ENCODE measurements at regions of chr5 and their contacts with region 1.

Region 1: GRCh38 chr5:139787568-139788293 is 7.9 kb upstream of the PSD2 start:
- DNase-seq: peak; percentile 85 to 89
- ATAC-seq: peak; percentile 88 to 92 (median 91)
- H3K4me3 ChIP-seq: peak overlapping the region; percentile 81
- H3K4me3 Mint-ChIP-seq: peak overlapping the region; percentile 84
- H3K27ac ChIP-seq: no peak overlapping the region
- H3K27ac Mint-ChIP-seq: no peak overlapping the region
- H3K4me1 ChIP-seq: peaks cover 16% of the 10 kb centered on the region
- H3K4me1 Mint-ChIP-seq: no peaks in the 10 kb centered on the region
- H3K27me3 ChIP-seq: no peaks in the 10 kb centered on the region
- H3K27me3 Mint-ChIP-seq: peaks cover 8 to 25% of the 10 kb centered on the region in 2 donors
- CTCF ChIP-seq: peak; percentile 98

Region 2: GRCh38 chr5:139501381-139501780 is 286.4 kb before region 1 on chr5:
- intact Hi-C with region 1: no loop called
- DNase-seq: no peak
- ATAC-seq: no peak
- H3K4me3 ChIP-seq: no peak overlapping the region
- H3K4me3 Mint-ChIP-seq: no peak overlapping the region
- H3K27ac ChIP-seq: no peak overlapping the region
- H3K27ac Mint-ChIP-seq: no peak overlapping the region
- H3K4me1 ChIP-seq: no peaks in the 10 kb centered on the region
- H3K4me1 Mint-ChIP-seq: no peaks in the 10 kb centered on the region
- H3K27me3 ChIP-seq: no peaks in the 10 kb centered on the region
- H3K27me3 Mint-ChIP-seq: peaks cover 5 to 12% of the 10 kb centered on the region in 2 donors
- CTCF ChIP-seq: no peak

Region 3: DNA sequence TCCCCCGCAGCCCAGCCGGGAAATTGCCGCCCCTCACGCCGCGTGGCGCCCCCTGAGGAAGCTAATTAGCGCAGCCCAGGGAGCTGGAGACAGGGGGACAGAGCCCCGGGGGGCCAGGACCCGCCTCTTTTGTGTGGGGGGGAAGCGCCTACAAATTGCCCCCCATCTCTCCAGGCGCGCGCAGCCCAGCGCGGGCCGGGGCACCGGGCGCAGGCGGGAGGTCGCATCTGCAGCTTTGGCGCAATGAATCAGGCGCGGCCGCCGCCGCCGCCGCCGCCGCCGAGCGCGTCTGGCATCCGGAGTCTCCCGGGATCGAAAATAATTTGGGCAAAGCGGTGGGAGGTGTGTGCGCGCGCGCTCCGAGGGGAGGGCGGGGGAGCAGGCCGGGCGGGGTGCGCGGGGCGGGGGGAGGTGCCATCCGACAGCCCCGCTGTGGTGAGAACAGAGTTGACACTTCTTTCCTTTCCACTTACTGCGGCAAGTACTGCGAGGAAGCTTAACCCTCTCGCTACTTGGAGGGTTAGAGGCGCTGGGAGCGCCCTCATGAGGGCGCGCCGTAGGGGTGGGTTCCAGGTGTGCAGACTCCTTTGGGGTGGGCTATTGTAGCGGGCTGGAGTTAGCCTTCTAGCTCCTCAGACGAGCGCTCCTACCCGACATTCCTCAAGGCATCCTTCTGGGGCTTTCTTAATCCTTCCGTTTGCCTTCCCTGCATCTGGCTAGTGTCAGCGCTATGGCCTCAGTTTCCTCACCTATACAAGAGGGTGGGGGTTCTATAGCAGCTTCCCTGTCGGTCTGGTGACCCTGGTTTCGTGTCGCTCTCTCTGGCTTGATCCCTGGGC is 76.4 kb before region 1 on chr5:
- intact Hi-C with region 1: no loop called
- DNase-seq: peak; percentile 71 to 84
- ATAC-seq: peak; percentile 62 to 77 (median 70)
- H3K4me3 ChIP-seq: peak overlapping the region; percentile 65
- H3K4me3 Mint-ChIP-seq: peak overlapping the region; percentile 83
- H3K27ac ChIP-seq: peak overlapping the region; percentile 97
- H3K27ac Mint-ChIP-seq: peak overlapping the region; percentile 89 to 94
- H3K4me1 ChIP-seq: peaks cover 48% of the 10 kb centered on the region
- H3K4me1 Mint-ChIP-seq: peaks cover 32 to 43% of the 10 kb centered on the region in 2 donors
- H3K27me3 ChIP-seq: no peaks in the 10 kb centered on the region
- H3K27me3 Mint-ChIP-seq: no peaks in the 10 kb centered on the region
- CTCF ChIP-seq: peak; percentile 31

Region 4: DNA sequence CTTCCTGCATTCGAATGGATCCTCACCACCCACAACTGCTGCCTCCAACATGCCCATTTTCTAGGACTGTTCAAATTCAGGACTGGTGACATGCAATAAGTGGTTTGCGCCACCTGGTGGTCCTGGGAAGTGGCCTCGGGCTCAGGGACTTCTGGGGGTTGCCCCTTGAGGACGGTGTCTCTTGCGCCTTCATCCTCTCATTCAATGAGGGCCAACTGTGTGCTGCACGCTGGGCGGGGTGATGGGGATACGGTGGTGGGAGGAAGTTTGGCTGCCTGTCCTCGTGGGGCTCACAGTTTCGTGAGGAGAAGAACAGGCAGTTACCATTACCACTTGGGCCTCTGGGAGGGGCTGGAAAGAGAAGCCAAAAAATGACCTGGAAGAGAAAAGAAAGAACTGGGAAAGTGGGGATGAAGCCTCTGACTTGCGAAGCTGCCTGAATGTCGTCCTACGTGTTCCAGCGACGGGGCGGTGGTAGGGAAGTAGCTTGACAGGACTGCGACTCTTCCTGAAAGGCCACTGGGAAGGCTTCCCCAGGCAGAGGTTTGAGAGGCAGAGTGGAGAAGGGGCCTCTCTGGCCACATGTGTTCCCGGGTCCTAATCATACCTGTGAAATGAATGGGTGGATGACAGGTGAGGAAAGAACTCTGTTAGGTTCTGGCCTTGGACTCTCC is 56.9 kb after region 1 on chr5:
- intact Hi-C with region 1: loop called (anchors 5 kb)
- DNase-seq: peak; percentile 63 to 83
- ATAC-seq: no peak
- H3K4me3 ChIP-seq: no peak overlapping the region
- H3K4me3 Mint-ChIP-seq: peak overlapping the region; percentile 21
- H3K27ac ChIP-seq: no peak overlapping the region
- H3K27ac Mint-ChIP-seq: no peak overlapping the region
- H3K4me1 ChIP-seq: peaks cover 14% of the 10 kb centered on the region
- H3K4me1 Mint-ChIP-seq: peaks cover 11 to 21% of the 10 kb centered on the region in 2 donors
- H3K27me3 ChIP-seq: peaks cover 4% of the 10 kb centered on the region
- H3K27me3 Mint-ChIP-seq: peaks cover 0 to 2% of the 10 kb centered on the region in 2 donors
- CTCF ChIP-seq: peak; percentile 65

Region 5: GRCh38 chr5:139863855-139864558 is 76.3 kb after region 1 on chr5:
- intact Hi-C with region 1: loop called (anchors 1 kb)
- DNase-seq: peak; percentile 59 to 76
- ATAC-seq: peak; percentile 66 to 93 (median 91)
- H3K4me3 ChIP-seq: no peak overlapping the region
- H3K4me3 Mint-ChIP-seq: no peak overlapping the region
- H3K27ac ChIP-seq: no peak overlapping the region
- H3K27ac Mint-ChIP-seq: no peak overlapping the region
- H3K4me1 ChIP-seq: no peaks in the 10 kb centered on the region
- H3K4me1 Mint-ChIP-seq: peaks cover 0 to 4% of the 10 kb centered on the region in 2 donors
- H3K27me3 ChIP-seq: no peaks in the 10 kb centered on the region
- H3K27me3 Mint-ChIP-seq: peaks cover 0 to 8% of the 10 kb centered on the region in 2 donors
- CTCF ChIP-seq: peak; percentile 88

Region 6: GRCh38 chr5:139968547-139969261 is 181.0 kb after region 1 on chr5:
- intact Hi-C with region 1: loop called (anchors 1 kb)
- DNase-seq: peak; percentile 88 to 91
- ATAC-seq: peak; percentile 97 to 100 (median 100)
- H3K4me3 ChIP-seq: no peak overlapping the region
- H3K4me3 Mint-ChIP-seq: no peak overlapping the region
- H3K27ac ChIP-seq: no peak overlapping the region
- H3K27ac Mint-ChIP-seq: no peak overlapping the region
- H3K4me1 ChIP-seq: peaks cover 3% of the 10 kb centered on the region
- H3K4me1 Mint-ChIP-seq: no peaks in the 10 kb centered on the region
- H3K27me3 ChIP-seq: peaks cover 9% of the 10 kb centered on the region
- H3K27me3 Mint-ChIP-seq: peaks cover 9 to 28% of the 10 kb centered on the region in 2 donors
- CTCF ChIP-seq: peak; percentile 100

Region 7: GRCh38 chr5:140157032-140157803 is 369.5 kb after region 1 on chr5:
- intact Hi-C with region 1: loop called (anchors 5 kb)
- DNase-seq: peak; percentile 83 to 94
- ATAC-seq: peak; percentile 96 to 100 (median 99)
- H3K4me3 ChIP-seq: no peak overlapping the region
- H3K4me3 Mint-ChIP-seq: peak overlapping the region; percentile 13
- H3K27ac ChIP-seq: no peak overlapping the region
- H3K27ac Mint-ChIP-seq: peak overlapping the region in 1 of 2 donors; percentile 31
- H3K4me1 ChIP-seq: peaks cover 14% of the 10 kb centered on the region
- H3K4me1 Mint-ChIP-seq: peaks cover 0 to 7% of the 10 kb centered on the region in 2 donors
- H3K27me3 ChIP-seq: no peaks in the 10 kb centered on the region
- H3K27me3 Mint-ChIP-seq: peaks cover 0 to under 1% of the 10 kb centered on the region in 2 donors
- CTCF ChIP-seq: peak; percentile 81

Measured in natural killer cell (primary cell).